Endothelial cell of umbilical vein (primary cell): ENCODE measurements at regions of chr14 and their contacts with region 1.

Region 1: GRCh38 chr14:95248432-95248831 is 71.3 kb downstream of the CLMN start:
- DNase-seq: no peak
- H3K4me3 ChIP-seq: peak overlapping the region in 1 of 3 experiments; percentile 0
- H3K27ac ChIP-seq: peak overlapping the region; percentile 55
- H3K4me1 ChIP-seq: peaks cover 46% of the 10 kb centered on the region
- H3K27me3 ChIP-seq: no peaks in the 10 kb centered on the region
- CTCF ChIP-seq: no peak
- POLR2A ChIP-seq: no peak

Region 2: GRCh38 chr14:95185033-95185766 is 63.2 kb before region 1 on chr14:
- CTCF ChIA-PET with region 1: no interaction called
- POLR2A ChIA-PET with region 1: interaction called, 3 read pairs
- dilution Hi-C with region 1: no loop called
- intact Hi-C with region 1: loop called (anchors 2 kb)
- DNase-seq: peak; percentile 63
- H3K4me3 ChIP-seq: no peak overlapping the region
- H3K27ac ChIP-seq: peak overlapping the region; percentile 27
- H3K4me1 ChIP-seq: peaks cover 38% of the 10 kb centered on the region
- H3K27me3 ChIP-seq: no peaks in the 10 kb centered on the region
- CTCF ChIP-seq: no peak
- POLR2A ChIP-seq: no peak

Region 3: GRCh38 chr14:95265106-95266094 is 17.0 kb after region 1 on chr14:
- CTCF ChIA-PET with region 1: interaction called, 7 read pairs
- POLR2A ChIA-PET with region 1: no interaction called
- dilution Hi-C with region 1: no loop called
- intact Hi-C with region 1: loop called (anchors 1 kb)
- DNase-seq: peak; percentile 96
- H3K4me3 ChIP-seq: peak overlapping the region in 1 of 3 experiments; percentile 37
- H3K27ac ChIP-seq: peak overlapping the region; percentile 98
- H3K4me1 ChIP-seq: peaks cover 23% of the 10 kb centered on the region
- H3K27me3 ChIP-seq: no peaks in the 10 kb centered on the region
- CTCF ChIP-seq: no peak
- POLR2A ChIP-seq: no peak

Region 4: GRCh38 chr14:95291859-95292542 is 43.6 kb after region 1 on chr14:
- CTCF ChIA-PET with region 1: no interaction called
- POLR2A ChIA-PET with region 1: no interaction called
- dilution Hi-C with region 1: no loop called
- intact Hi-C with region 1: no loop called
- DNase-seq: peak; percentile 62
- H3K4me3 ChIP-seq: no peak overlapping the region
- H3K27ac ChIP-seq: peak overlapping the region; percentile 20
- H3K4me1 ChIP-seq: peaks cover 13% of the 10 kb centered on the region
- H3K27me3 ChIP-seq: no peaks in the 10 kb centered on the region
- CTCF ChIP-seq: no peak
- POLR2A ChIP-seq: no peak

Region 5: DNA sequence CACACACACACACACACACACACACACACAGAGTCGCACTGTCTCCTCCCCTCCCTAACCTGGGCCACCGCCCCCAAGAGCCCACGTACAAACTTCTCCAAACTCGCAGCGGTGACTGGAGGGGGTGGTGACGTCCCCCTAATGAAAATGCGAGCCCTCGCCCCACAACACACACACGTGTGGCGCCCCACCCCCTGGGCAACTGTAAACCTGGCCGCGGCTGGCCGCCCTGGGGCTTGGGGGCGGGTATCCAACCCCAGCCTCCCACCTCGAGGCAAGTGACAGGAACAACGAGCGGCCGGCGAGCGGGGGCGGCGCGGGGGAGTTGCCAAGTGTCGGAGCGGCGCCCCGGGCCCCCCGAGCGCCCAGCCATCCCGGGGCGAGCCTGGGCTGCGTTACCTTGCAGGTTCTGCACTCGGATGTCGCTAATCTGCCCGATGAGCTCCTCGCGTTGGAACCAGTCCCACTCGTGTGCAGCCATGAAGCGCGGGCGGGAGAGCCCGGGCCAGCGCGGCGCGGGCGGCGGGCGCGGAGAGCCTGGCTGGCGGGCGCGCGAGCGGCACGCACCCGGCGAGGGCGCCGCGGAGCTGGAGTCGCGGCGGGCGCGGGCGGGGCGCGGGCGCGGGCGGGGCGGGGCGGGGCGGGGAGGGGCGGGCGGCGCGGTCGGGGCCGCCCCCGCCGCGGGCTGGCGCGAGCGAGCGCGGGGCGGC is 71.0 kb after region 1 on chr14 and contains the start of gene CLMN:
- CTCF ChIA-PET with region 1: no interaction called
- POLR2A ChIA-PET with region 1: no interaction called
- dilution Hi-C with region 1: no loop called
- intact Hi-C with region 1: loop called (anchors 5 kb)
- DNase-seq: peak; percentile 25
- H3K4me3 ChIP-seq: peak within 1 kb of the TSS; percentile 45 to 75 (median 50)
- H3K27ac ChIP-seq: no peak within 1 kb of the TSS
- H3K4me1 ChIP-seq: peaks cover 3% of the 10 kb centered on the region
- H3K27me3 ChIP-seq: peaks cover 2% of the 10 kb centered on the region in 2 experiments
- CTCF ChIP-seq: no peak
- POLR2A ChIP-seq: no peak
- total RNA-seq, gene CLMN: 8.4 and 9.6 TPM in 2 replicates

Region 6: GRCh38 chr14:95431199-95432143 is 183.0 kb after region 1 on chr14:
- CTCF ChIA-PET with region 1: interaction called, 3 read pairs
- POLR2A ChIA-PET with region 1: no interaction called
- dilution Hi-C with region 1: no loop called
- intact Hi-C with region 1: loop called (anchors 5 kb)
- DNase-seq: peak; percentile 27
- H3K4me3 ChIP-seq: no peak overlapping the region
- H3K27ac ChIP-seq: no peak overlapping the region
- H3K4me1 ChIP-seq: no peaks in the 10 kb centered on the region
- H3K27me3 ChIP-seq: no peaks in the 10 kb centered on the region
- CTCF ChIP-seq: peak; percentile 40 to 50
- POLR2A ChIP-seq: no peak